HEK293 (cell line): ENCODE measurements at regions of chr18 and their contacts with region 1.

Region 1: DNA sequence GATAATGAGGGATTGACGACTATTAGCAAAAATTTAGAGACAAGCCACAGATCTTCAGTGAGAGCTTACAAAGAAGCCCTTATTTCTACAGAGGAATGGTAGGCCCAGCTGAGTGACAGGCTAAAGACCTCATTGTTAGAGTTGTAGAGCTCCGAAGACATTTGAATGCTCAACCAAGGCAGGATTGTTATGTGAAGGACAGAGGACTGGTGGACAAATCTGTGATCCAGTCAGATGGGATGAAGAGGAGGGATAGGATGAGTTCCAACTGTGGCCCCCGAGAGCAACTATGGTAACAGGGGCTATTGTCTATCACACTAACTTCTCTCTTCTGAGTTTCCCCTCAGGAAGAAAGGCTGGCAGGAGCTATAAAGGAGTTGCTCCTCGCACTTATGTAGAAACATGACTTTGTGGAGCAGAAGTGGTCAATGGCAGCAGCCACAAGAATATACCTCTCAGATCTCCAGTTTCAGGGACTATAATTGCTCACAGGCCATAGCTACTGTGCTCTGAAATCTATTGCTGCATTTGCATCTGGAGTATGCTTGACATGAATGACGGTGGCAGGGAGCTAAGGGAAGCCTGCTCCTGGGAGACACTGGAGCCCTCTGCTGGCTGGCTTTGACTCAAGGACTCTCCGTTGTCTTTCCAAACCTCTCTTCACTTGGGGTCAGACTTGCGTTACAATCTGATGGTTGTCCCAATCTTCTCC is 50.3 kb upstream of the GREB1L start:
- H3K4me3 ChIP-seq: no peak overlapping the region
- H3K27ac ChIP-seq: no peak overlapping the region
- H3K4me1 ChIP-seq: no peaks in the 10 kb centered on the region
- CTCF ChIP-seq: peak; percentile 53

Region 2: GRCh38 chr18:21179590-21180220 is 12.0 kb before region 1 on chr18:
- CTCF ChIA-PET with region 1: interaction called, 96 read pairs
- POLR2A ChIA-PET with region 1: no interaction called
- H3K4me3 ChIP-seq: no peak overlapping the region
- H3K27ac ChIP-seq: no peak overlapping the region
- H3K4me1 ChIP-seq: no peaks in the 10 kb centered on the region
- CTCF ChIP-seq: peak; percentile 68

Region 3: DNA sequence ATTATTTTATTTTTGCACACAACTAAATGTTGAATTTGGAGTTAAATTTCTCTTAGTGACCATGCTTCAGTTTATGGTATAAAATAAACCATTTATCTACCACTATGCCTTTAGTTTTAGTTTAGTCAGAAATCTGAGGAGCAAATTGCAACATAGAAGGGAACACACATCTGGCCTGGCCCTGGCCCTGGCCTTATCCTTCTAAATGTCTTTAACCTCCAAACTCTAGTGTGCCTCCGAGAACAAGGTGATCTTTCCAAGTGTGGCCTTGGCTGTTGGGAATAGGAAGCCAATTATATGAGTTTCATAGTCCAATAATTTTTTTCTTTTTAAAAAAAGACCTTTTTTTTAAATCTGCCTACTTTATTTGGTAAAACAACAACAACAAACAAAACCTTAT is 18.5 kb after region 1 on chr18:
- CTCF ChIA-PET with region 1: interaction called, 19 read pairs
- POLR2A ChIA-PET with region 1: no interaction called
- H3K4me3 ChIP-seq: no peak overlapping the region
- H3K27ac ChIP-seq: no peak overlapping the region
- H3K4me1 ChIP-seq: no peaks in the 10 kb centered on the region
- CTCF ChIP-seq: no peak

Region 4: DNA sequence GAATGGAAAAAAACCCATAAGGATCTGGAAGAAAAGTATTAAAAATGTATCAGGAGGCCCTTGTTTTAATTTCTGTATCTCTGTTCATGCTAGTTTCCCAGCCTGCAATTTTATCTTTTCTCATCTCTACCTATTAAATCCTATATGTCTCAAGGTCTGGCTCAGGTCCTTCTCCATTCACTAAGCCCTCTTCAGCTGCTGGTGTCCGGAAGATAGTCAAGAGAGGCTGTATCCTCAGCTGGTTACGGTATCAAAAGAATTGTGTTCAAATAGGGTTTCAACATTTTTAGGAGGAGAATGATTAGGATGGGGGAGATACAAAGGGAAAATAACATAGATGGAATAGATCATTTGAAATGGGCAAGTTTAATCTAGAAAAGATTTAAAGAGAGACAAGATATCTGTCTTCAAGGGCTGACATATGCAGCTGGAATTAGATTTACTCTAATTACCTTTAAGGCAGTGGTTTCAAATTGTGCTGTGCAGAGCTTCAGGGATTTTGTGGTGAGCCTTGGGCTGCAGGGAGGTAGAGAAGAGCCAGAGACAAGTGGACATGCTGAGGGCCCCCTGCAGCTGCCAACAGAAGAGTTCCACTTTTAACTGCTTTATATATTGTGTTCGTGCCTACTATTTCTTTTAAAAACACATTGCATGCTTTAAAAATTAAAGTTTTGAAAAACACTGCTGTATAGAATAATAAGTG is 74.4 kb after region 1 on chr18:
- CTCF ChIA-PET with region 1: no interaction called
- POLR2A ChIA-PET with region 1: no interaction called
- H3K4me3 ChIP-seq: no peak overlapping the region
- H3K27ac ChIP-seq: no peak overlapping the region
- H3K4me1 ChIP-seq: peaks cover 44% of the 10 kb centered on the region
- CTCF ChIP-seq: no peak

Region 5: DNA sequence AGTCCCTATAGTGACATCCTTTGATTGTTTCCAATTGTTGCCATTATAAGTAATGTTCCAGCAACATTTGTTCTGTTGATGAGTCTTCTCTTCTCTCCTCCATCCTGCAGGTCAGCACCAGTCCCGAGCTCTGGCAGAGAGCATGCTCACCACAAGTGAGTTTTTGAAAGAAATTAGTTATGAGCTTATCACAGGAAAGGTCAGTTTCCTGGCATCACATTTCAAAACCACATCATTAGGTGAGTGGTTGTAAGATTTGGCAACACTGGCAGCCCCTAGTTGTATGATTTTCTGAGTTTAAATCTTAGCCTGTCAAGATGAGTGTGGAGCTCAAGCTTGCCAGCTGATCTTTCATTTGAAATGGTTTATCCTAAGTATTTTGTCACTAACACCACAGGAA is 259.2 kb after region 1 on chr18:
- CTCF ChIA-PET with region 1: interaction called, 112 read pairs
- POLR2A ChIA-PET with region 1: no interaction called
- H3K4me3 ChIP-seq: no peak overlapping the region
- H3K27ac ChIP-seq: no peak overlapping the region
- H3K4me1 ChIP-seq: peaks cover 7% of the 10 kb centered on the region; the same call in 1 of the 2 replicates
- CTCF ChIP-seq: no peak

Region 6: DNA sequence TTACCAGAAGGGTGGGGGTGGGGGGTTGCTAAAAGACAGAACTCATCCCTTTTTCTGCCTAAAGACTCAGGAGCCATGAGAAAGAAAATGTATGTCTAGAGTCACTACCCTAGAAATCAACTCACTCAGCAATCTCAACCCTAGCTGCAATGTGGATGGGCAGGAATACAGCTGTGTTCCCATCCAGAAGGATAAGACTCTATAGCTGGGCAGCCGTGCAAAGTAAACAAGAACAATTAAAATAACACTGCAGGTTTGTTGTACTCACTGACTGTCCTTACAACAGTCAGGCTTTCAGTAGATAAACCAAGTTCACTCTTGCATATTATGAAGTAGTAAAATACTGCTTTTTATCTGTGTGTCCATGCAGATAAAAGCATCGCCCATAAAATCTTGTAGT is 334.7 kb after region 1 on chr18:
- CTCF ChIA-PET with region 1: interaction called, 10 read pairs
- POLR2A ChIA-PET with region 1: no interaction called
- H3K4me3 ChIP-seq: no peak overlapping the region
- H3K27ac ChIP-seq: no peak overlapping the region
- H3K4me1 ChIP-seq: no peaks in the 10 kb centered on the region
- CTCF ChIP-seq: no peak